Activated T-helper 1 cell treated with anti-CD3 and anti-CD28 coated beads, Interleukin-12 subunit alpha, Interleukin-12 subunit beta, Interleukin-2, Interleukin-4 antibody, amounts not matched to agents 30 ng/mL and 10 ng/mL and 1 ng/mL, durations not matched to agents 14 hours and 24 hours and 36 hours (primary cell): ENCODE measurements at regions of chr21 and their contacts with region 1.

Region 1: GRCh38 chr21:36927719-36928117 is 38.8 kb downstream of the HLCS start:
- DNase-seq: peak; percentile 47
- H3K4me3 Mint-ChIP-seq: no peak overlapping the region
- H3K27ac Mint-ChIP-seq: no peak overlapping the region
- H3K4me1 Mint-ChIP-seq: peaks cover 9% of the 10 kb centered on the region
- H3K27me3 Mint-ChIP-seq: no peaks in the 10 kb centered on the region

Region 2: DNA sequence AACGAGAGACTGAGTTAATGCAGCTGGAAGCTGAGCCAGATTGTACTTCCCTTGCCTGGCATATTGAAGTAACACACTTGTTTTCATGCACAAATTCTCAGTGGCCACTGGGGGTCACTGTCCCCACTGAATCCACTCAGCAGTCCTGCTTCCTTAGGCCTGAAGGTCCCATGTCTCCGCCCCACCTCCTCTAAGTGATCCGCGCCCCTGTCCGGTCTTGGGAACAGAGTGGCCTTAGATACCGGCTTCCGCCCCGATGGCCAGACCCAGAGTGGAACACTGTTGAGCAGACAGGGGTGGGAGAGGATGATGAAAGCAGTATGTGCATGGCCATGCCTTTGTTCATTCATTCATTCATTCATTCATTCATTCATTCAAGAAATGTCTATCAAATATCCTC is 507.7 kb before region 1 on chr21:
- intact Hi-C with region 1: loop called (anchors 5 kb)
- DNase-seq: peak; percentile 13
- H3K4me3 Mint-ChIP-seq: no peak overlapping the region
- H3K27ac Mint-ChIP-seq: no peak overlapping the region
- H3K4me1 Mint-ChIP-seq: peaks cover 9% of the 10 kb centered on the region
- H3K27me3 Mint-ChIP-seq: no peaks in the 10 kb centered on the region

Region 3: DNA sequence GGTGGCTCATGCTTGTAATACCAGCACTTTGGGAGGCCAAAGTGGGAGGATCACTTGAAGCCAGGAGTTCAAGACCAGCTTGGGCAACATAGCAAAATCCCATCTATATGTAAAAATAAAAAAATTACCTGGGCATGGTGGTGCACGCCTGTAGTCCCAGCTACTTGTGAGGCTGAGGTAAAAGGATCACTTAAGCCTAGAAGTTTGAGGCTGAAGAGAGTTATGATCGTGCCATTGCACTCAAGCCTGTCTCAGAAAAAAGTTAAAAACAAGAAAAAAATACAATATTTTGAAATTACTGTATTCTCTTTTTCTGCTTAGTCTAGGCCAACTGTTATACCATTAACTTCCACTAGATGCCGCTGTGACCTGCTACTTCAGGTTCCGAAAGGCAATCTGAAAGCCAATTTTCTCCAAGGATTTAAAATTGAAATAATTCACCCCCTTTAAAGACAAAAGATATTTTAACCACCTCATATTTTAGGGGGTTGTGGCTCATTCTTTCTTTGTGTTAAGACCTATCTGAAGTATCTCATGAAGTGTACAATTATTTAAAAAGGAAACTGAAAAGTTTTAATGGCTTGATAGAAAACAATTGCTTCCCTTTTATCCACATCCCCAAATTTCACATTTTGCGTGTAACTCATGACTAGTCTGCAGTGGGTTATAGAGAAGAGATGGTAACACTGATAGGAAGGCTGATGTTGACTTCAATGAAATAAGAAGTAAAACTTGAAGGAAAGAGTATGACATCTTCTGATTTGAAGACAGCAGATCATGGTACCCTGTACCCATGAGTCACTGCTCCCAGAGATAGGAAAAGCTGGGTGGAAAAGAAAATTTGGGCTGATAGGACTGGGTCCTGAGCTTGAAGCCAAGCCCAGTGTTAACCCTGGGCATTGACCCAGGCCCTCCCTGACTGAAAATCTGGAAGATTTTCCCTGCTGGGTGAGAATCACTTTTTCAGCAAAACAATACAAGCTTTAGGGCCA is 423.4 kb before region 1 on chr21:
- intact Hi-C with region 1: loop called (anchors 1 kb)
- DNase-seq: no peak
- H3K4me3 Mint-ChIP-seq: no peak overlapping the region
- H3K27ac Mint-ChIP-seq: no peak overlapping the region
- H3K4me1 Mint-ChIP-seq: no peaks in the 10 kb centered on the region
- H3K27me3 Mint-ChIP-seq: peaks cover 8% of the 10 kb centered on the region

Region 4: GRCh38 chr21:36706951-36707762 is 220.6 kb before region 1 on chr21:
- intact Hi-C with region 1: loop called (anchors 10 kb)
- DNase-seq: no peak
- H3K4me3 Mint-ChIP-seq: no peak overlapping the region
- H3K27ac Mint-ChIP-seq: peak overlapping the region; percentile 36
- H3K4me1 Mint-ChIP-seq: no peaks in the 10 kb centered on the region
- H3K27me3 Mint-ChIP-seq: peaks cover 75% of the 10 kb centered on the region

Region 5: DNA sequence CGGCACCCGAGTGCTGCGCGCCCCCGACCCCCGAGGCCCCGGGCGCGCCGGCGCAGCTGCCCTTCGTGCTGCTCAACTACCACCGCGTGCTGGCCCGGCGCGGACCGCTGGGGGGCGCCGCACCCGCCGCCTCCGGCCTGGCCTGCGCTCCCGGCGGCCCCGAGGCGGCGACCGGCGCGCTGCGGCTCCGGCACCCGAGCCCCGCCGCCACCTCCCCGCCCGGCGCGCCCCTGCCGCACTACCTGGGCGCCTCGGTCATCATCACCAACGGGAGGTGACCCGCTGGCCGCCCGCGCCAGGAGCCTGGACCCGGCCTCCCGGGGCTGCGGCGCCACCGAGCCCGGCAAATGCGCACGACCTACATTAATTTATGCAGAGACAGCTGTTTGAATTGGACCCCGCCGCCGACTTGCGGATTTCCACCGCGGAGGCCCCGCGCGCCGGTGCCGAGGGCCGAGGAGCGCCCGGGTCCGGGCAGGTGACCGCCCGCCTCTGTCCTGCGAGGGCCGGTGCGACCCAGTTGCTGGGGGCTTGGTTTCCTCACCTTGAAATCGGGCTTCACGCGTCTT is 179.8 kb before region 1 on chr21:
- intact Hi-C with region 1: loop called (anchors 5 kb)
- DNase-seq: no peak
- H3K4me3 Mint-ChIP-seq: no peak overlapping the region
- H3K27ac Mint-ChIP-seq: no peak overlapping the region
- H3K4me1 Mint-ChIP-seq: peaks cover 11% of the 10 kb centered on the region
- H3K27me3 Mint-ChIP-seq: peaks cover 41% of the 10 kb centered on the region

Region 6: DNA sequence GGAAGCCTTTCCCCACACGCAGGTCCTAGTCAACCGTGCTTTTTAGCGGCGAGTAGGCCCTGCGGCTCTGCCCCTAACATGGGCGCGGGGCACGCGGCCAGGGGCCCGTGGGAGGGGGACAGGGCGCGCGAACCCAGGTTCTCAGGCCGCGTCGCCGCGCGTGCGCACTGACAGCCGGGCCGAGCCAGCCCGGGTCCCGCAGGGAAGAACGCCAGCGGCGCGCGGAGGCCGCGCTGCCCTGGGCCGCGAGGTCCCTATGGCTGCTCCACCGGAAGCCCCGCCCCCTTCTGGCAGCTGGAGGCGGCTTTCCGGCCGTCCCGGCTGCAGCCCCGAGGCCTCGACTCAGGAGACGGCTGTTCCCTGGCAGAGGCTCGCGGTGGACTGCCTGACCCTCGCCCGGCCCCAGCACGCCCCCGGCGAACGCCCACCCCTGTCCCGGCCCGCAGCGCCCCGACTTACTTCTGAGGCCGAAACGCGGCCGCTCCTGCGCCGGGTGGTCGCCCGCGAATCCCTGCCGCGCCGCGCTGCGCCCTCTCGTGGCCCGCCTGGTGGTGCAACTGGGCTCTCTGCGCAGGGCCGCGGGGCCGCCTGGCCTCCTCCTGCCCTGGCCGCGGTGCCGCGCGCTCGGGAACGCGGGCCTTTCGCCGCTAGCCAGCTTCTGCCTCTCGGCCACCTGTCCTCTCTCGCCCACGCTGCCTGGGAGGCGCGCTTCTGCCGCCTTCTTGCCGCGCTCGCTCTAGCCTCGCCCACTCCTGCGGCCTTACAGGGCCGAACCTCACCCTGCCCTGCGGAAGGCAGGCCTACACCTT is 62.2 kb after region 1 on chr21:
- intact Hi-C with region 1: no loop called
- DNase-seq: peak; percentile 87
- H3K4me3 Mint-ChIP-seq: peak overlapping the region; percentile 87
- H3K27ac Mint-ChIP-seq: peak overlapping the region; percentile 96
- H3K4me1 Mint-ChIP-seq: peaks cover 37% of the 10 kb centered on the region
- H3K27me3 Mint-ChIP-seq: no peaks in the 10 kb centered on the region